Cardiac septum (tissue), 1 donor: ENCODE measurements at regions of chr6 and their contacts with region 1.

Region 1: GRCh38 chr6:97394160-97394748 is 111.2 kb upstream of the MMS22L start:
- DNase-seq: no peak

Region 2: DNA sequence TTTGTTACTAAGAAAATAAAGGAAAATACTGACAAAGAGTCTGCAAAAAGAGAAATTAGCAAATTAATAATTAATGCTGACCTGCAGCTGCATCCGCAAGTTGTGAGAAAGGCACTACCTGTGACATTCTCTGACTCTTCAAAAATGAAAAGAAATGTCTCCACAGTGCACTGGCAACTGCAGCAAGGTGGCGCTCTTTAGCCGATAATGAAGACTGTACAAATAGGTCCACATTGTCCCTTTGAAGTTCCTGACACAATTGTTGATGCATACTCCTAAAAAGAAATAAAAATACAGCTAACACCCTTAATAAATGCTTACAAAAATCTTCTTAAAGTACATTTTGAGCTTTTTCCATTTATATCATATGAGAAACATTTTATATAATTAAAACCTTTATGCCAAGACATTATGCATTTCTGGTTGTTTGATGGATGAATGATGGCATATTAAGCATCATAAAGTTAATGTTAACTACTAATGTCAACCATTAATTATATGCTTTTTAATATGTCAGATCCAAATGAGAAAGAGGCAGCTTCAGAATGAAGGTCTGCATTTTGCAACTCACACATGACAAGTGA is 207.7 kb before region 1 on chr6:
- intact Hi-C with region 1: loop called (anchors 5 kb)
- DNase-seq: no peak

Region 3: GRCh38 chr6:97215157-97215769 is 179.0 kb before region 1 on chr6:
- intact Hi-C with region 1: loop called (anchors 10 kb)
- DNase-seq: no peak

Region 4: GRCh38 chr6:97497713-97498331 is 103.6 kb after region 1 on chr6:
- intact Hi-C with region 1: no loop called
- DNase-seq: no peak